Activated T-helper 2 cell treated with anti-CD3 and anti-CD28 coated beads, Interferon-gamma antibody, Interleukin-2, Interleukin-4, amounts not matched to agents 10 μg/mL and 5 μg/mL and 100 μg/mL, durations not matched to agents 14 hours and 24 hours and 36 hours (primary cell): ENCODE measurements at regions of chr16 and their contacts with region 1.

Region 1: GRCh38 chr16:24729362-24729984 is at the start of gene TNRC6A:
- DNase-seq: peak; percentile 74
- H3K4me3 Mint-ChIP-seq: peak within 1 kb of the TSS; percentile 98
- H3K27ac Mint-ChIP-seq: peak within 1 kb of the TSS; percentile 97
- H3K4me1 Mint-ChIP-seq: peaks cover 36% of the 10 kb centered on the region
- H3K27me3 Mint-ChIP-seq: peaks cover 3% of the 10 kb centered on the region
- total RNA-seq, gene TNRC6A: 47.3 and 50.3 TPM in 2 replicates

Region 2: DNA sequence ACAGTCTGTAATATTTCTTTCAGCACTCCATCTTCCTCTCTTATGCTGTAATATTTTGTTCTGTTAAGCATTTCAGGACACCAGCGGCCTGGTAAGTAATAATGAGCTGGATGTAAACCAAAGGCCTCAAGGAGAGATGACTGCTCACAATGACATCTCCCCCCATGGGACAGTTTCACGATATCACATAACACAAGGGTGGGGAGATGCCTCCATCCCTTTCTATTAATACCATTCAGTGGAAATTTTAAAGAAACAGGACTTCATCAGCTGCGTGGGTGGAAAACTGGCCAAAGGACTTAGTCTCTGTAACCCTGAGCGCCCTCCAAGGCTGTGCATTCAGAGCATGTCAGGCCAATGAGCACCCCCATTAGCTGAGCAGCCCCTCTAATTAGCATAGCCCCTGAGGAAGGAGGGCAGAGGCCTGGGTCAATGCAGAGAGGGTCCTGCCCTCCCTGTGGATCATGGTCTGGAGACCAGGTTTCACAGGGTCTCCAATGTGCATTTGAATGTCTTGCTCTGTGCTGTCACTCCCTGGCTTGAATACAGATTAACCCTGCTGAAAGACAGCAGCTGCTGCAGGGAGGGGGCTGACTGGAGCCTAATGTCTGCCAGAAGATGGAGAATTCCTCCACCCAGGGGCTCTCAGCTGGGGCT is 1759.1 kb before region 1 on chr16:
- intact Hi-C with region 1: no loop called
- DNase-seq: no peak
- H3K4me3 Mint-ChIP-seq: no peak overlapping the region
- H3K27ac Mint-ChIP-seq: no peak overlapping the region
- H3K4me1 Mint-ChIP-seq: no peaks in the 10 kb centered on the region
- H3K27me3 Mint-ChIP-seq: peaks cover 7% of the 10 kb centered on the region

Region 3: DNA sequence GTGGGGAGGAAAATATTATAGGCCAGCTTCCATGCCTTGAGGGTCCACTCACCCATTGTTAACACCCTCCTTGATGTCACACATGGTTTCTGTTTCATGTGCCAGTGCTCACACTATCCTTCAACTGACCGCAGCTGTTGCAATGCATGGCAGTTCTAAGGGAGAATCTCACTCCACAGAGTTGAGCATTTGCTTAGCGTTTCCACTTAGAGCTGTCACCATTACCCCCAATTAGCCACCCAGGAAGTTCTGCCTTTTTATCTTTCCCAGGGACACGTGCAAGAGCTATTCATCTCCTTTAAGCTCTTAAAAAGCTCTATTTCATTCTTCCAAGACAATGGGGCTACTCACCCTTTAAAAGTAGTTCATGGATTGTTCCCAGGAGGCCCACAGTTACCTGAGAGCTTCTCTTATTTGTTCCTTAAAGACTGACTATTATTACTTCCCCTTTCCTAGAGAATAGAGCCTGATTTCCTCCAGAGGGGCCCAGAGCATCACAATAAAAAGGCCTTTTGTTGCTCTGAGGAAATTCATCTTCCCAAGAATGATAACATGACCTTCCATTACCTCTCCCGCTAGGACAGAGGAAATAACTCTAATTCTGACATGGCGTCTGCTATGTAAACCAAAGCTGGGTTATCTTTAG is 346.6 kb before region 1 on chr16:
- intact Hi-C with region 1: no loop called
- DNase-seq: no peak
- H3K4me3 Mint-ChIP-seq: no peak overlapping the region
- H3K27ac Mint-ChIP-seq: no peak overlapping the region
- H3K4me1 Mint-ChIP-seq: no peaks in the 10 kb centered on the region
- H3K27me3 Mint-ChIP-seq: no peaks in the 10 kb centered on the region

Region 4: DNA sequence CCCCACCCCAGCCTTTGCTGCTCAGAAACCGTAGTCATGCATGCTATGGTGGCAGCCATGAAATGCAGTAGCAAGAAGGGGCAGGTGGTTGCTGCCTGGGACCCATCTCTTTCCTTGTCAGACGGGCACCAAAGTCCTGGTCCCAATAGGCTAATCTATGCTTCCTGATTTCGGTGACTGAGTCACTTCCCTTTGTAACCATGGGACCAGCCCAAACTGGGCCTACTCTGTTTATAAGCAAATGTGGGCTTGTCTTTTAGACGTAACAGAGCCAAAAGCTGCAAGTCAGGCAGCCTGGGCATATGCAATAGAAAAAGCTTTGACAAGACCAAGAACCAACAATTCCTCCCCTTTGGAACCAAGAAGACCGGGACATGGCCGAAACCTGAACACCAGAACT is 289.2 kb before region 1 on chr16:
- intact Hi-C with region 1: no loop called
- DNase-seq: no peak
- H3K4me3 Mint-ChIP-seq: no peak overlapping the region
- H3K27ac Mint-ChIP-seq: no peak overlapping the region
- H3K4me1 Mint-ChIP-seq: no peaks in the 10 kb centered on the region
- H3K27me3 Mint-ChIP-seq: no peaks in the 10 kb centered on the region

Region 5: GRCh38 chr16:24580665-24581064 is 148.8 kb before region 1 on chr16:
- intact Hi-C with region 1: loop called (anchors 10 kb)
- DNase-seq: no peak
- H3K4me3 Mint-ChIP-seq: no peak overlapping the region
- H3K27ac Mint-ChIP-seq: no peak overlapping the region
- H3K4me1 Mint-ChIP-seq: peaks cover 3% of the 10 kb centered on the region
- H3K27me3 Mint-ChIP-seq: peaks cover 4% of the 10 kb centered on the region

Region 6: GRCh38 chr16:24771132-24771778 is 41.8 kb after region 1 on chr16:
- intact Hi-C with region 1: no loop called
- DNase-seq: no peak
- H3K4me3 Mint-ChIP-seq: no peak overlapping the region
- H3K27ac Mint-ChIP-seq: no peak overlapping the region
- H3K4me1 Mint-ChIP-seq: peaks cover 19% of the 10 kb centered on the region
- H3K27me3 Mint-ChIP-seq: no peaks in the 10 kb centered on the region